Activated CD4-positive, alpha-beta memory T cell treated with anti-CD3 and anti-CD28 coated beads for 36 hours (primary cell): ENCODE measurements at regions of chr2 and their contacts with region 1.

Region 1: GRCh38 chr2:24984912-24985311 is 13.2 kb upstream of the DNAJC27 start:
- DNase-seq: no peak
- H3K4me3 Mint-ChIP-seq: no peak overlapping the region
- H3K27ac Mint-ChIP-seq: no peak overlapping the region
- H3K4me1 Mint-ChIP-seq: no peaks in the 10 kb centered on the region
- H3K27me3 Mint-ChIP-seq: peaks cover 1% of the 10 kb centered on the region

Region 2: DNA sequence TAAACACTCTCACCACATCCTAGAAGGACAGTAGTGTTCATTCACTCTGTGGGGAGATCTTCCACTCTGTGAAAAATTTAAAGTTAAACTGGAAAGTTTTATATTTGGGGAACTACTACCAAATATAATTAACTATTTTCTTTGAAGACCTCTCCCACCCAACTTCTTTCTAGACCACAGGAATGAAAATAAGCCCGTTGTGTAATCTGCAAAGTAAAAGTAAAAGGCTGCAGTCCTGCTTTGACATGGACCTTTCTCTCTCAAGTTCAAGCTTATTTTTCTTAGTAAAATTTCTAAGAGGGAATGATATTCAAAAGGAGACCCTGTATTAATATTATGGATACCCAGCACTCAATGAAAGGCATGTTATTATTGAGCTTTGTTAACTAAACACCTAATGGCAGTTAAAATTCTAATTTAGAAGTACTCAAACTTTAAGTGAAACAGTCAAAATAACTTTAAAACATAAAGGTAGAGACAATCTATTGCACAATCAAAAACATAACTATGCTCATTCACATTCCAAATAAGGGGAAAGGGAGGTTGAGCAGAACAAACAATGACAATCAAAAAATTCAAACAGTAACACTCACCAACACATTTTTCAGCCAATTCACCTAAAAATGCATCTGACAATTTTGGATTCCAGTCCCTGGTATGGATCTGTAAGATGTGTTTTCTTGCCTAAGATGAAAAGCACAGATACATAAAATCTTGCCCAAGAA is 1156.5 kb before region 1 on chr2:
- CTCF ChIA-PET with region 1: no interaction called
- POLR2A ChIA-PET with region 1: no interaction called
- intact Hi-C with region 1: no loop called
- DNase-seq: no peak
- H3K4me3 Mint-ChIP-seq: no peak overlapping the region
- H3K27ac Mint-ChIP-seq: no peak overlapping the region
- H3K4me1 Mint-ChIP-seq: peaks cover 5% of the 10 kb centered on the region
- H3K27me3 Mint-ChIP-seq: no peaks in the 10 kb centered on the region

Region 3: DNA sequence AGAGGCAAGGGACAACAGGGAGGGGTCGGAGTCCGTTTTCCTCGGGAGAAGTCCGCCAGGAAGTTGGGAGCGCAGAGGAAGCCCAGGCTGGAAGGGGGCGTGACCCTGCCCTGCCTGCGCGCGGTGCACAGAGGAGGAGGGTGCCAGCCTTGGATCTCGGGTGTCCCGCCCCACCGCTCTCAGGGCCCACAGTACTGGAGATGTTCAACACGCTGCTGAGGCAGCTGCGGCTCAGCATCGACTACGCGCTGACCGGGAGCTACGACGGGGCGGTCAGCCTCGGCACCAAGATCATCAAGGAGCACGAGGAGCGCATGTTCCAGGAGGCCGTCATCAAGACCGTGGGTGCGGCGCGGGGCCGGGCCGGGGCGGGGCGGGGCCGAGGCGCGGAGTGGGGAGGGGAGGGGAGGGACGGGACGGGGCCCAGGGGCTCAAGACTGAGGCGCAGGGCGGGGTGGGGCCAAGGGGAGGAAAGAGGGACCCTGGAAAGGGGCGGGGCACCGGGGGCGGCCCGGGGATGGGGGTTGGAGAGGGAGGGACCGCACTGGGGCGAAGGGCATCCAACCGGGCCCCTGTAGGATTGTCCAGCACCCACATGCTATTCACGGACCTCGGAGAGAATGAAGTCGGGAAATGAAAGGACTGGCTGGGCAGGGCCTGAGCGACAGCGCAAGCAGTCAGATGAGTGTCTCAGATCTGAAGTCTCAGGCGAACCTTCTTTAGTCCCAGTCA is 146.8 kb after region 1 on chr2:
- CTCF ChIA-PET with region 1: interaction called, 271 read pairs
- POLR2A ChIA-PET with region 1: interaction called, 3 read pairs
- intact Hi-C with region 1: loop called (anchors 1 kb)
- DNase-seq: peak; percentile 23
- H3K4me3 Mint-ChIP-seq: peak overlapping the region; percentile 48
- H3K27ac Mint-ChIP-seq: no peak overlapping the region
- H3K4me1 Mint-ChIP-seq: peaks cover 12% of the 10 kb centered on the region
- H3K27me3 Mint-ChIP-seq: peaks cover 50% of the 10 kb centered on the region